CD8-positive, alpha-beta T cell (primary cell): ENCODE measurements at regions of chr6 and their contacts with region 1.

Region 1: GRCh38 chr6:97876711-97877110 is 593.7 kb upstream of the MMS22L start:
- DNase-seq: no peak
- ATAC-seq: no peak
- H3K4me3 ChIP-seq: no peak overlapping the region
- H3K4me3 Mint-ChIP-seq: no peak overlapping the region
- H3K27ac ChIP-seq: no peak overlapping the region
- H3K27ac Mint-ChIP-seq: no peak overlapping the region
- H3K4me1 ChIP-seq: no peaks in the 10 kb centered on the region
- H3K4me1 Mint-ChIP-seq: no peaks in the 10 kb centered on the region
- H3K27me3 ChIP-seq: no peaks in the 10 kb centered on the region
- H3K27me3 Mint-ChIP-seq: no peaks in the 10 kb centered on the region
- CTCF ChIP-seq: no peak

Region 2: DNA sequence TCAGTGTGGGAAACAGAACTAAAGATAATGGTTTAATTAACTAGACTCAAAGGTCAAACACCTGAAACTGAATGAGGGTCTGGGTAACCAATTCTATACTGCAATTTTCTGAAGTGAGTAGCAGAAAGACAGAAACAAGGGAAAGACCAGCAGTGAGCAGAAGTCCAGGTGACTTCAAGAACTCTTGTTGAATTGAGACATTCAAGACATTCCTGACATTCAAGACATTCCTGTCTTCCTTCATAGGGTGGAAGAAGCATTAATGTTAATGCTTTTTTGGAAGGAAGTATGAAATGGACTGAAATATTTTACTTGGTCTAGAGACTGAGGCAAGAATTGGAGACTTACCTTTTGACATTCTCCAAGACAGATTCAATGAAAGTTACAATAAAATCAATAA is 63.8 kb before region 1 on chr6:
- CTCF ChIA-PET with region 1: no interaction called
- POLR2A ChIA-PET with region 1: no interaction called
- intact Hi-C with region 1: no loop called
- DNase-seq: no peak
- ATAC-seq: no peak
- H3K4me3 ChIP-seq: no peak overlapping the region
- H3K4me3 Mint-ChIP-seq: no peak overlapping the region
- H3K27ac ChIP-seq: no peak overlapping the region
- H3K27ac Mint-ChIP-seq: no peak overlapping the region
- H3K4me1 ChIP-seq: no peaks in the 10 kb centered on the region
- H3K4me1 Mint-ChIP-seq: no peaks in the 10 kb centered on the region
- H3K27me3 ChIP-seq: no peaks in the 10 kb centered on the region
- H3K27me3 Mint-ChIP-seq: no peaks in the 10 kb centered on the region
- CTCF ChIP-seq: no peak

Region 3: DNA sequence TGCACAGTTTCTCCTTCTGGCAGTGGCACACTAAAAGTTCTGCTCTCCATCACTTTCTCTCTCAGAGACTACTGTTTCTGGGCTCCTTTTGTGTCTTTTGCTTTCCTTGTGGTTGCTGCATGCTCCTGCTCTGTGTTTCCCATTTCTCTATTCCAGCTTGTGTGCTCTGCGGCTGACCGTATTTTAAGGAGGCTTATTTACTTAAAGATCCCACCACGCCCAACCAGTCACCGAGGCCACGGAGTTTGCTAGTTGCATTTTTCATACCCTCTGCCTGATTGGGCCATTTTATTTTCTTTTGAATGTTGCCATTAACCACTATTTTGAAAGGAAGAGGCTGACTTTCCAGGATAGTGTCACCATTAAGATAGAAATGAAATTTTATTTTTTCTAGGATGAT is 32.7 kb after region 1 on chr6:
- CTCF ChIA-PET with region 1: no interaction called
- POLR2A ChIA-PET with region 1: no interaction called
- intact Hi-C with region 1: loop called in 1 of 2 experiments (anchors 2 kb)
- DNase-seq: no peak
- ATAC-seq: no peak
- H3K4me3 ChIP-seq: no peak overlapping the region
- H3K4me3 Mint-ChIP-seq: no peak overlapping the region
- H3K27ac ChIP-seq: no peak overlapping the region
- H3K27ac Mint-ChIP-seq: no peak overlapping the region
- H3K4me1 ChIP-seq: no peaks in the 10 kb centered on the region
- H3K4me1 Mint-ChIP-seq: no peaks in the 10 kb centered on the region
- H3K27me3 ChIP-seq: no peaks in the 10 kb centered on the region
- H3K27me3 Mint-ChIP-seq: no peaks in the 10 kb centered on the region
- CTCF ChIP-seq: no peak

Region 4: GRCh38 chr6:98039869-98040607 is 163.3 kb after region 1 on chr6:
- CTCF ChIA-PET with region 1: no interaction called
- POLR2A ChIA-PET with region 1: no interaction called
- intact Hi-C with region 1: no loop called
- DNase-seq: no peak
- ATAC-seq: no peak
- H3K4me3 ChIP-seq: no peak overlapping the region
- H3K4me3 Mint-ChIP-seq: no peak overlapping the region
- H3K27ac ChIP-seq: no peak overlapping the region
- H3K27ac Mint-ChIP-seq: no peak overlapping the region
- H3K4me1 ChIP-seq: no peaks in the 10 kb centered on the region
- H3K4me1 Mint-ChIP-seq: no peaks in the 10 kb centered on the region
- H3K27me3 ChIP-seq: no peaks in the 10 kb centered on the region
- H3K27me3 Mint-ChIP-seq: no peaks in the 10 kb centered on the region
- CTCF ChIP-seq: no peak